Left colon (tissue), 2 donors: ENCODE measurements at regions of chr5 and their contacts with region 1.

Region 1: GRCh38 chr5:9209846-9210492 is 335.9 kb downstream of the SEMA5A start:
- DNase-seq: no peak
- ATAC-seq: peak; percentile 53

Region 2: GRCh38 chr5:7927466-7928375 is 1282.2 kb before region 1 on chr5:
- intact Hi-C with region 1: loop called in 1 of 2 experiments (anchors 10 kb)
- DNase-seq: peak; percentile 40 to 77
- ATAC-seq: peak; percentile 99